Right ventricle myocardium superior (tissue), 1 donor: ENCODE measurements at regions of chr10 and their contacts with region 1.

Region 1: DNA sequence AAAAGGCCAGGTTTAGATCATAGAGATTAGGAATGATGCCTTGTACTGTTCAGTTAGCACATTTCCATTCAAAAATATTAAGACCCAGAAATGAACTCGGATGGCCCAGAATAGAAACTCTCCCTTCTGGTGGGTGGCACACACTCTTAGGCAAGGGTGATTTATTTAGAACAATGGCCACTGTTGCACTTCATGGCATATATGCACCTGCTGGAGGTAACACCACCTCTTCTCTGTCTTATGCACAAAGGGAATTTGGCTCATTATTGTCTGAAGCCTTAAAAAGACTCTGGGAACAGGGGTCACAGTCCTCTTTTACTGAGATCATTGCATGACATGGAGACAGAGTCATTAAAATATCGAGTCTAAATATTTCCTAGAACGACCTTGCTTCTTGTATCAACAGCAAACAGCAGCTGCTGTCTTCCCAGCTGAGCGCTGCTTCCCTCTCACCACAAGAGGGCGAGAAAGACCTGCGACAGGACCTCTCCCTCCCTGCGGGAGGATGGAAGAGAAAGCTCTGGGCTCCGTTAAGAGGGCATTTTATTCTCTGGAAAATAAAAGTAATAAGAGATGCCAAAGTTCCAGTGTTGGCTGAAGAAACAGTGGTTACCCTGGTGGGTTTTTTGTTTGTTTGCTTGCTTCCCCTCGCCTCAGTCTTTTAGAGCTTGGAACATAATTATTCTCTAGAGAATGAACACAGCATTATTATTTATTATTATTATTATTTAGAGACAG is 13.6 kb upstream of the BAMBI start:
- DNase-seq: peak; percentile 77
- ATAC-seq: peak; percentile 97

Region 2: GRCh38 chr10:28991326-28992270 is 327.9 kb after region 1 on chr10:
- intact Hi-C with region 1: loop called (anchors 5 kb)
- DNase-seq: no peak
- ATAC-seq: peak; percentile 94

Region 3: GRCh38 chr10:29131952-29132820 is 468.4 kb after region 1 on chr10:
- intact Hi-C with region 1: loop called (anchors 5 kb)
- DNase-seq: peak; percentile 64
- ATAC-seq: peak; percentile 82

Region 4: GRCh38 chr10:29314726-29315125 is 651.0 kb after region 1 on chr10:
- intact Hi-C with region 1: loop called (anchors 5 kb)
- DNase-seq: no peak
- ATAC-seq: no peak